ENCODE measurements at regions of chr6 and their contacts with region 1.

Region 1: DNA sequence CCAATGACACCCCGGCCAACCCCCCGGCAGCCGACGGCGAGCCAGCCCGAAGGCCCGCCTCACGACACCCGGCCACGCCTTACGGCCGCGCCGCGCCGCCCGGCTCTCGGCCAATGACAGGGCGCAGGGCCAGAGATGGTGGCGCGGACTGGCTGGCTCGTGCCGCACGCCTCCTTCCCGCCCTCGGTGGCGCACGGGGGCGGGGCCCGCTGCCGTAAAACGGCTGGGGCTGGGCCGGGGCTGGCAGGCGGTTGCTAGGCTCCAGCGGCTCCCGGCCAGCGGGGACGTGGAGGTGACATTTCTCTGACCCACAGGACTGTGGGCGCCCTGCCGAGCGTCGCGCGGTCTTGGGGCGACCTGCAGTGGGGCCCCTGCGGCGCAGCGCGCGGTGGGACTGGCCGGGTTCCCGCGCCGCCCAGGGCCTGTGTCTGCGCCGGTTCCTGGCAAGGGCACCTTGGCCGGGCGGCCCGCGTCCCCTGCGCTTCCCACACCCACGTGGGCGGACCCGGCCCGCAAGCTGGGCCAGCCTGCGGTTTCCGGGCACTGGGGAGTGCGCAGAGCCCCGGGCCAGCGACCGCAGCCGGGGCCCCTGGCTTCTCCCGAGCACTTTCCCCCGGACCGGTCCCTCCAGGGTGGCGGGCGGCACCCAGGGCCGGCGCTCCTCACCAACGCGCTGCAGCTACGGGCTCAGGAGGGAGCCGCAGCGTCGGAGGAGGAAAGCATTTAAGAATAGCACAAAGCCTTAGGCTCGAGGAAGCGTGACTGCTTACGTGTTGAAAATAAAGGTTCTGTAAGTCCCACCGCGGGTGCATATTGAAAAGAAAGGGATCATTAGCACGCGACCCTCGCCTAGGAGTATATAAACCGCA is at the start of gene MPC1:
- DNase-seq: peak; percentile 97
- H3K4me3 ChIP-seq: peak within 1 kb of the TSS; percentile 57 to 98 (median 97)
- H3K27ac ChIP-seq: peak within 1 kb of the TSS; percentile 92 to 97 (median 95)
- H3K4me1 ChIP-seq: peaks cover 0 to 22% (median 11%) of the 10 kb centered on the region in 4 donors
- H3K27me3 ChIP-seq: no peaks in the 10 kb centered on the region
- CTCF ChIP-seq: no peak
- EP300 ChIP-seq: peak in 1 of 4 donors; percentile 33
- POLR2A ChIP-seq: peak; percentile 37 to 55
- total RNA-seq, gene MPC1: 52.9 to 82.0 (median 78.3) TPM

Region 2: GRCh38 chr6:165884813-165885765 is 498.1 kb before region 1 on chr6:
- intact Hi-C with region 1: loop called (anchors 5 kb)
- DNase-seq: peak; percentile 92
- H3K4me3 ChIP-seq: no peak overlapping the region
- H3K27ac ChIP-seq: peak overlapping the region in 1 of 4 donors; percentile 51
- H3K4me1 ChIP-seq: peaks cover 0 to 24% (median 9%) of the 10 kb centered on the region in 4 donors
- H3K27me3 ChIP-seq: no peaks in the 10 kb centered on the region
- CTCF ChIP-seq: peak; percentile 79 to 95 (median 90)
- EP300 ChIP-seq: no peak
- POLR2A ChIP-seq: no peak

Region 3: DNA sequence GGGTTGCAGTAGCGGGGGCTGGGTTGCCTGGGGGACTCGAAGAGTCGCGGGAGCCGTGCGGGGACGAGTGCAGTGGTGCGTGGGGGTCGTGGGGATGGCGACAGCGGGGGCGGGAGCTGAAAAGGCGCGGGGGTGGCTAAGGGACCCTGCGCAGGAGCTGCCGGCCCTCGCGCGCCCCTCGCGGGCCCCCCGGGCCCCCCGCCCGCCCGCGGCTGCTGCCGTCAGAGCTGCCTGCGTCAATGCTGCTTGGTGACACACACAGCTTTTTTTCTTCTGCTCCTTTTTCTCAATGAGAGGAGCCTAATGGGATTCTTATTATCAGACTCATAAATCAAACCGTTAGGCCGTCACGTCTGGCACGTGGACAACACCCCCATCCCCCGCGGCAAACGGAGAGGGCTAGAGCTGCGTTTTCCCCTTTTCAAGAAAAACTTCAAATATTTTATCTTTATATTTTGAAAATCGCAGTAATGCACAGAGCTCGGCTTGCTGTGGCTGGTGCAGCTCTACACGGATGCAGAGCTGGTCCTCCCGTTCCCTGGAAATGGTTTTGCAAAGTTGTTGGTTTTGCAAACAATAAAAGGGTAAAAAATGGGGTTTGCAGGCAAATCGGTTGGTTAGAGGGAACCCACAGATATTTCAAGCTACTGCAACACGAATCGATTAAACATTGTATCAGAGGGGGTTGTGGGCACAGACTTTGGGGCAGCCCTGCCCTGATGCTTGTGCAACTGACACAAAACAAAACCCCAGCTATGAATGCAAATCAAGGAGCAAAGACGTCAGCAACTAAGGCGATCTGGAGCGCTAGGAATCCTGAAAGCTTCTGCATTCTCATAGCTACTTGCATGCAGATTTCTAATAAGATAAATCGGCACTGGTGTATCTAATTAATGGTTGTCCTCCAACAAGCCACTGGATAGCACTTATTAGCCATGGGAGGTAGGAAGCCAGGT is 376.9 kb before region 1 on chr6:
- intact Hi-C with region 1: loop called (anchors 10 kb)
- DNase-seq: peak; percentile 88
- H3K4me3 ChIP-seq: peak overlapping the region; percentile 29 to 53 (median 46)
- H3K27ac ChIP-seq: peak overlapping the region; percentile 73 to 93 (median 80)
- H3K4me1 ChIP-seq: peaks cover 0 to 58% (median 50%) of the 10 kb centered on the region in 4 donors
- H3K27me3 ChIP-seq: peaks cover 0 to 46% (median 12%) of the 10 kb centered on the region in 3 donors
- CTCF ChIP-seq: no peak
- EP300 ChIP-seq: peak; percentile 89 to 98 (median 93)
- POLR2A ChIP-seq: no peak

Region 4: GRCh38 chr6:166313255-166314070 is 69.7 kb before region 1 on chr6:
- intact Hi-C with region 1: no loop called
- DNase-seq: no peak
- H3K4me3 ChIP-seq: no peak overlapping the region
- H3K27ac ChIP-seq: no peak overlapping the region
- H3K4me1 ChIP-seq: peaks cover 0 to 4% (median 2%) of the 10 kb centered on the region in 4 donors
- H3K27me3 ChIP-seq: peaks cover 6 to 13% (median 8%) of the 10 kb centered on the region in 3 donors
- CTCF ChIP-seq: peak in 2 of 4 experiments; percentile 19 to 39
- EP300 ChIP-seq: no peak
- POLR2A ChIP-seq: no peak

Region 5: GRCh38 chr6:166342349-166343149 is 40.6 kb before region 1 on chr6 and contains the start of gene SFT2D1:
- intact Hi-C with region 1: loop called (anchors 1 kb)
- DNase-seq: peak; percentile 92
- H3K4me3 ChIP-seq: peak within 1 kb of the TSS; percentile 67 to 100 (median 96)
- H3K27ac ChIP-seq: peak within 1 kb of the TSS; percentile 84 to 93 (median 90)
- H3K4me1 ChIP-seq: peaks cover 0 to 46% (median 34%) of the 10 kb centered on the region in 4 donors
- H3K27me3 ChIP-seq: no peaks in the 10 kb centered on the region
- CTCF ChIP-seq: no peak
- EP300 ChIP-seq: peak in 1 of 4 donors; percentile 16
- POLR2A ChIP-seq: peak; percentile 90
- total RNA-seq, gene SFT2D1: 26.0 to 46.2 (median 37.6) TPM

Region 6: DNA sequence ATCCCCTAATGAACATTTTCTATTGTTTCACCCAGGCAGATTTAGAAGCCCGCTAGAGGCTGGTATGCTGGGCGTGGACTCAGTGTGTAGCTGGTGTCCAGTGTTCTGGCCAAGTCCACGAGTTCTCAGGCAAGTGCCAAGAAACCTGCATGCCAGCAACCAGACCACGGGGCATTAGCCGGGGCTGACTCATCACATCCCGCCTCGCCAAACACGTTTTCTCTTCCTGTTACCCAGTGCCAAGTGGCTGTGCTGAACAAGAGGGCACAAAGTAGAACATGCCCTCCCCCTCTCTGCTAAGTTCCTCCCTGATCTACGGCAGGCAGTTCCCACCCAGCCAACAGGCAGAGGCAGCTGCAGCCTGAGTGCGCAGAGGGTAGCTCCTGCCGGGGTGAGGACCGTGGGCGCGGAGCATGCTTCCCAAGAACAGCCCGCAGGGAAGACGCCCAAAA is 173.7 kb after region 1 on chr6:
- intact Hi-C with region 1: loop called (anchors 2 kb)
- DNase-seq: peak; percentile 97
- H3K4me3 ChIP-seq: peak overlapping the region in 2 of 4 donors; percentile 14 to 21
- H3K27ac ChIP-seq: peak overlapping the region; percentile 66 to 85 (median 80)
- H3K4me1 ChIP-seq: peaks cover 0 to 52% (median 33%) of the 10 kb centered on the region in 4 donors
- H3K27me3 ChIP-seq: no peaks in the 10 kb centered on the region
- CTCF ChIP-seq: no peak
- EP300 ChIP-seq: peak in 2 of 4 donors; percentile 78 to 88
- POLR2A ChIP-seq: no peak

Region 7: DNA sequence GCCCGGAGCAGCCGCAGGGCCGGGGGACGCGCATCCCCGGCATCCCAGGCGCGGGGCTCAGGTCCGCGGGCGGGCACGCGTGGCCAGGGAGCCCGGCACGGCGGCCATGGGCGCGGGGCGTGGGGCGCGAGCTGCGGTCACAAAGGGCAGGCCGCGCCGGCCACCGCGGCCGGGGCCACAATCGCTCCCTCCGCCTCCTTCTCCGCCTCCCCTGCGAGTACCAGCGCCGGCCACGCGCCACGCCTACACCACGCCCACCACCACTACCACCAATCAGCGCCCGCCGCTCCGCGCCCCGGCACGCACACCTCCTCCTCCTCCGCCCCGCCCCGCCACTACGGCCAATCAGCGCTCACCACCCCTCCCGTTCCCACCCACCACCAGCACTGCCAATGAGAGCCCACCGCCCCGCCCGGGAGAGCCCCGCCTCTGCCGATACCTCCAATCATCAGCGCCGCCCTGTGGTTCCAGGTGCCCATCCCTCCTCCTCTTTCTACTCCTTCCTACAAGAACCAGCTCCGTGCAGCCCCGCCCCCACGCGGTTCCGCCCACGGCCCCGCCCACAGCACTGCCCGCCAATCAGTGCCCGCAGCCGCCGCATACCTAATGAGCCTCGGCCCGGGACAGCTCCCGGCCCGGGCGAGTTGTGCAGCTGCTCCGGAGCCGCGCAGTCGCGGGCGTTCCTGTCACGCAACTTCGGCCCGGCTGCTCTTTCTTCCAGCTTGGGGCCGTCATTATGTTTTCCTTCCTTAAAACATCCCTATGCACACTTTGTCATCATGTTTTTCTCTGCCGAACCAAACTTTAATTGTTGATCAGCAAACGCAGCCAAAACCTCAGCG is 244.1 kb after region 1 on chr6 and contains the start of gene RPS6KA2:
- intact Hi-C with region 1: loop called (anchors 2 kb)
- DNase-seq: peak; percentile 100
- H3K4me3 ChIP-seq: peak within 1 kb of the TSS; percentile 52 to 92 (median 85)
- H3K27ac ChIP-seq: peak within 1 kb of the TSS; percentile 89 to 97 (median 93)
- H3K4me1 ChIP-seq: peaks cover 0 to 47% (median 33%) of the 10 kb centered on the region in 4 donors
- H3K27me3 ChIP-seq: no peaks in the 10 kb centered on the region
- CTCF ChIP-seq: no peak
- EP300 ChIP-seq: no peak
- POLR2A ChIP-seq: peak; percentile 82 to 88
- total RNA-seq, gene RPS6KA2: 27.8 to 44.7 (median 32.3) TPM

Region 8: DNA sequence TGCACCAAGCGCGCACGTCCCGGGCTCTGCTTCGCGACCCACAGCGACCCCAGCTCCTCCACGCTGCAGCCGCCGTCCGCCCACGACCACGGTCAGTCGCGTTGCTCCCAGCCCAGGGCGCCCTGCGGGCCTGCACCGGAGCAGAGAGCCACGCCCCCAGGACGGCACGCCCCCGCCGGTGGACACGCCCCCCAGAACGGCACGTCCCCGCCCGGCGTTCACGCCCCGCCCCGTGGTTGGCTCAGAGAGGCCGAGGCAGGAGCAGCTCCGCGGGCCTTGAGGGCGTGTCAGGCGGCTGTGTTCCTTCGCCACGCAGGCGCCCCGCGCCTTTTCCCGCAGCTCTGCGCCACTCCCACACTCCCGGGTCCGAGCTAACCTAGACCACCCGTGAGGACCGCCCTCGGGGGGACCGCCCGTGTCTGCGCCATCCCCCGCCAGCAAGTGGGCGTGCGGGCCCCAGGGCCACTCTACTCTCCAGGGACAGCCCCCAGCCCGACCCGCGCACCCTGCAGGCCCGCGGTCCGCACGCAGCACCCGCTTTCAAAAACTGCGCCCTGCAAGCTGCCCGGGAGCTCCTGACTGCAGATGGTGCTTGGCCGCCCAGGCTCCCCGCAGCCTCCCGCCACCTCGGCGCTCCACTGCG is 573.4 kb after region 1 on chr6 and contains the start of gene RNASET2:
- intact Hi-C with region 1: loop called (anchors 2 kb)
- DNase-seq: peak; percentile 98
- H3K4me3 ChIP-seq: peak within 1 kb of the TSS; percentile 63 to 97 (median 78)
- H3K27ac ChIP-seq: peak within 1 kb of the TSS; percentile 82 to 90 (median 88)
- H3K4me1 ChIP-seq: peaks cover 0 to 21% (median 17%) of the 10 kb centered on the region in 4 donors
- H3K27me3 ChIP-seq: no peaks in the 10 kb centered on the region
- CTCF ChIP-seq: no peak
- EP300 ChIP-seq: no peak
- POLR2A ChIP-seq: peak; percentile 56 to 84
- total RNA-seq, gene RNASET2: 41.0 to 53.1 (median 42.5) TPM